ENCODE measurements at regions of chr1 and their contacts with region 1.

Region 1: DNA sequence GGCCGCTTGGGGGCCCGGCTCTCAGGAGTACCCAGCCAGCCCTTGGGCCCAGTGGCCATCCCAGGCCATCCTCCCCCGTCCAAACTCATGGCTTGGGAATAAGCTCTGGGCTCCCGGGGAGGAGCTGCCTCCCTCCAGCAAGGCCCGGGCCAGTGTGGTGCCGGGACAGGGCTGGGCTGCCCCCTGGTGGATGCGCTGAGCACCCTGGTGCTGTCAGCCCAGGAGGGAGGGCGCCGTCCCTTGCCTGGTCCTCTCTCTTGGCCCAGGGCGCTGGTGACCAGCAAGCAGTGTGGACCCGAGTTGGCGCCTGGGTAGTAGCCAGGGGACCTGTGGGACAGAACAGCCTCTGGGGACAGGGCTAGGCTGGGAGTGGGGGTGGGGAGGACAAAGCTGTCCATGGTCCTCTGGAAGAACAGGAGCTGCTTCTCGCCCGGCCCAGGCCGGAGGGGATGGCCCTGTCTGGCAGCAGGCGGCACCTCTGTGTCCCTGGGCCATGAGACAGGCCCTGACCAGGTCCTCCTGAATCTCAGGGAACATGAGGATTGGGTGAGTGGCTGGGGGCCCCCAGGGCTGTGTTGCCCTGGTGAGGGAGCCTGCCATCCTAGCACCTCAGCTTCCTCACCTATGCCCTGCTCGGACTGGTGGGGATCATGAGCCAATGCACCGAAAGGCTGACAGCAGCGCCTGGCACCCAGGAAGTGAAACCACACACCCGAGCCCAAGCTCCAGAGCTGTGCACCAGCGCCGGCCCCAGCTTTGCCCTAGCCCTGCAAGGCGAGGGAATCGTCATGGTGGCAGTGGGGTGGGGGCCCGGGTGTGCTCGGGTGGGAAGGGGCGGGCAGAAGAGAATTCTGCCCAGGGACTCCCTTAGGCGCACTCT is 9.4 kb downstream of the MORN1 start:
- DNase-seq: peak; percentile 86
- H3K4me3 Mint-ChIP-seq: no peak overlapping the region
- H3K27ac Mint-ChIP-seq: no peak overlapping the region
- H3K4me1 Mint-ChIP-seq: no peaks in the 10 kb centered on the region
- H3K27me3 Mint-ChIP-seq: no peaks in the 10 kb centered on the region

Region 2: DNA sequence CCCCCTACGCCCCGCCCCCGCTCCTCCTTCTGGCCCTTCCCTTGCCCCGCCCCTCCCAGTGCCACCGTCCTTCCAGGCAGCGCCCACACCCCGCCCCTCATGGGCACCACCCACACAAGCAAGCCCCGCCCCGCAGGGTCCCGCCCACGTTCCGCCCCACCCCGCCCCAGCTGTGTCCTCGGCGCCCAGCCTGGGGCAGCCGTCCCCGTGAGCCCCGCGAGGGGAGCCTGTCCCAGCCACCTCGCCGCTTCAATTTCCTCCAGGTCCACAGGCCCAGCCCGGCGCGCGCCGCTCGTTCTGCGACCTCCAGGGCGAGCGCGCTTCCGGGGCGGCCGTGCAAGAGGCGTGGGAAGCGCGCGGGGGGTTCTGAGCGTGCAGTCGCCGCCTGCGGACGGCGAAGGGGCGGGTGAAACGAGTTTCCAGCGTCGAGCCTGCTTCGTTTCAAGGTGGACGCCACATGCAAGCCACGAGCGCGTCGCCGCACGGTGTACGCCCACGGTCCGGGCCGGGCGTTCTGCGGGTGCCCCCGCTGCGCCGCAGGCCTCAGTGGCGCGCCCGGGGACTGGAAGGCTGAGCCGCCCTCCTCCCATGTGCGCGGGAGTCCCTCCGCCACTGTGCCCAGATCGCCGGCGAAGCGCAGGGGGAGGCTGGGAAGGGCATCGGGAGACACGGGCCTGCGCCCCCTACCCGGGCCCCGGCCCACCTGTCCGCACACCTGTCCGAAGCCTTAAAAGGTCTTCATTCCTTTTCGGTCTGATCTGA is 176.6 kb before region 1 on chr1:
- CTCF ChIA-PET with region 1: interaction called, 129 read pairs
- intact Hi-C with region 1: no loop called
- DNase-seq: peak; percentile 96
- H3K4me3 Mint-ChIP-seq: peak overlapping the region; percentile 52
- H3K27ac Mint-ChIP-seq: no peak overlapping the region
- H3K4me1 Mint-ChIP-seq: no peaks in the 10 kb centered on the region
- H3K27me3 Mint-ChIP-seq: no peaks in the 10 kb centered on the region

Region 3: DNA sequence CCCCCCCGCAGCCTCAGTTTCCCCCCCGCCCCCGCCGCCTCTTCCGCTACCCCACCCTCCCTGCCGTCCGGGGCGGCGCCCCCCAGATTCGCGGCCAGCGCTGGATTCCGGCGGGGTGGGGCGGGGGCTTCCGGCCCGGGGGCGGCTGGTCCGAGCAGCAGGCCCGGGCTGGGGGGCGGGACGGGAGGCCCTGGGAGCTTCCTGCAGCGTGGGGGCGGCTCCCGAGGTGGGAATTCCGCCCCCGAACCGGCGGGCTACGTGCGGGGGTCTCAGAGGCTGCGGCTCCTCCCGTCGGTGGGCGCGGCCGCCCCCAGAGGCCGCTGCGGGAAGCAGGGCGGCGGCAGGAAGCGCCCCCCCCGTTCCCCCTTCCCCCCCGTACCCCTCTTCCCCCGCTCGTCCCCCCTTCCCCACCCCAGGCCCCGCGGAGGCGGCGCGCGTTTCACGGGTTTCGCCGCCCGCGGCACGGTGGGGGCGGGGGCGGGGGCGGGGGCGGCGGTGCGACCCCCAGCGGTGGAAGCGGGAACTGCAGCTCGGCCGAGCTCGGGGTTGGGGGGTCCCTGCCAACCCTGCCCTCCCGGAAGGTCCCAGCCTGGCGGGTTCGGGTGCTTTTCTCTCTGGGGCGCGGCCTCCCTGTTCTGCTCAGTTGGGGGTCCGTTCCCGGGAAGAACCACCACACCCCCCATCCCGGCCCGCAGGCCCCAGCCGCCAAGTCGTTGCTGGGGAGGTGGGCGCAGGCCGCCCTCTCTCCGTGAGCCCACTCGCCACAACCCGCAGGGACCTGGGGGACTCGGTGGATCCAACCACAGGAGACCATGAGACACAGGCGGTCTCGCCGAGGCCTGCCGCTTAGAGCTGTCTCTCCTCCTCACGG is 66.9 kb before region 1 on chr1:
- CTCF ChIA-PET with region 1: interaction called, 10 read pairs
- intact Hi-C with region 1: loop called (anchors 5 kb)
- DNase-seq: peak; percentile 54
- H3K4me3 Mint-ChIP-seq: peak overlapping the region; percentile 34
- H3K27ac Mint-ChIP-seq: peak overlapping the region; percentile 13
- H3K4me1 Mint-ChIP-seq: peaks cover 4% of the 10 kb centered on the region
- H3K27me3 Mint-ChIP-seq: no peaks in the 10 kb centered on the region

Region 4: GRCh38 chr1:2360588-2361364 is 21.2 kb before region 1 on chr1:
- CTCF ChIA-PET with region 1: no interaction called
- intact Hi-C with region 1: no loop called
- DNase-seq: no peak
- H3K4me3 Mint-ChIP-seq: no peak overlapping the region
- H3K27ac Mint-ChIP-seq: no peak overlapping the region
- H3K4me1 Mint-ChIP-seq: no peaks in the 10 kb centered on the region
- H3K27me3 Mint-ChIP-seq: no peaks in the 10 kb centered on the region

Region 5: DNA sequence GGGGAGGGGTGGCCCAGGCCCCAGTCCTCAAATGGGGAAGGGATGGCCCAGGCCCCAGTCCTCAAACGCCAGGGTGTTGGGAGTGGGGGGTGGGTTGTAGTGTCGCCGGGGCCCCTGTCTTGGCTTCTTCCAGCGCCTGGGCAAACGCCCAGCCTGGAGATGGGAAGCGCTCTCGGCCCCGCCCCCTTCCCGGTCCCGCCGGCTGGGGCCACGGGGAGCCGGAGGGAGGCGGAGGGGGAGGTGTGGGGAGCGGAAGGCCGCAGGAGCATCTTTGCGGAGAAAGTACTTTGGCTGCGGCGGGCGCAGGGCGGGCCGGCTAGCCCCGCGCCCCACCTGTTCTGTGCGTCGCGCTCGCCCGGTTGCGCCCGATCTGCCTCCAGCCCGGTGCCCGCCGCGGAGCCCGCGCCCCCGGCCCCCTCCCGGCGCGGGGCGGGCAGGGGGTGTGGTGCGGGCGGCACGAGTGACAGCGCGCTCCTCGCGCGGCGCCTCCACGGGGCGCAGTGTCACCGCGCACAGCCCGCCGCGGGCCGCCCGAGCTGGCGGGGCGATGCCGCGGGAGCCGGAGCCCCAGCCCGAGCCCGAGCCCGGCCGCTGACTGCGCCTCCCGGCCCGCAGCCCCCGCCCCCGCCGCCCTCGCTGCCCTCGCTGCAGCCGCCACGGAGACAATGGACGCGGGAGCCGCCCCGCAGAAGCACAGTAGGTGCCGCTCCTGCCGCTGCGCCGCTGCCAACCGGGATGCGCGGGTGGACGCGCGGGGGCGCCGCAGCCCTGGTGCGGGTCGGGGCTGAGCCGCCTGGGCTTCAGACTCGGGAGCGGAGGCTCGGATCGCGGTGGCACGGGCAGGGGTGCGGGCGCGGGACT is 61.5 kb after region 1 on chr1:
- CTCF ChIA-PET with region 1: no interaction called
- intact Hi-C with region 1: no loop called
- DNase-seq: peak; percentile 62
- H3K4me3 Mint-ChIP-seq: no peak overlapping the region
- H3K27ac Mint-ChIP-seq: no peak overlapping the region
- H3K4me1 Mint-ChIP-seq: no peaks in the 10 kb centered on the region
- H3K27me3 Mint-ChIP-seq: peaks cover 7% of the 10 kb centered on the region